HepG2 (cell line): ENCODE measurements at regions of chr19 and their contacts with region 1.

Region 1: GRCh38 chr19:10332955-10333757 is at the start of gene RAVER1:
- DNase-seq: peak; percentile 91
- ATAC-seq: peak; percentile 70
- H3K4me3 ChIP-seq: peak within 1 kb of the TSS; percentile 77 to 89 (median 86)
- H3K27ac ChIP-seq: peak within 1 kb of the TSS; percentile 95
- H3K4me1 ChIP-seq: peaks cover 37% of the 10 kb centered on the region
- H3K27me3 ChIP-seq: no peaks in the 10 kb centered on the region; a peak in 1 of 5 replicates
- CTCF ChIP-seq: no peak
- EP300 ChIP-seq: no peak; a peak in 1 of 4 replicates
- POLR2A ChIP-seq: peak; percentile 75 to 92
- RAD21 ChIP-seq: peak; percentile 42
- total RNA-seq, gene RAVER1: 7.9 and 17.7 TPM in 2 replicates

Region 2: DNA sequence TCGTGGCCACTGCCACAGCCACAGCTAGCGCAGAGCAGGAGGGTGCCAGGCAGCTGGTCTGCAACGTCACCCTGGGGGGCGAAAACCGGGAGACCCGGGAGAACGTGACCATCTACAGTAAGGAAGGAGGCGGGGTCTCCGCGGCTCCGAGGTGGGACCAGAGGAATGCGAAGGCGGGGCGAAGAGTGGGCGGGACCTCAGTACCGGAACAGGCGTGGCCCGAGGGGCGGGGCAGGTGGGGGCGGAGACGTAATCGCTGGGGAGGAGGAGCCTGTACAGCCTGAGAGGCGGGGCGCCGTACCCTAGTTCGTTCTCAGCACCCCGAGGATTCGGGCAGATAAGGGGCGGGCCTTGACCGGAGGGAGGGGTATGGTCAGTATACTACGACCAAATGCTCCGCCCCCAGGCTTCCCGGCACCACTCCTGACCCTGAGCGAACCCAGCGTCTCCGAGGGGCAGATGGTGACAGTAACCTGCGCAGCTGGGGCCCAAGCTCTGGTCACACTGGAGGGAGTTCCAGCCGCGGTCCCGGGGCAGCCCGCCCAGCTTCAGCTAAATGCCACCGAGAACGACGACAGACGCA is 40.9 kb before region 1 on chr19:
- CTCF ChIA-PET with region 1: no interaction called
- POLR2A ChIA-PET with region 1: interaction called, 55 read pairs
- in situ Hi-C with region 1: no loop called
- intact Hi-C with region 1: loop called (anchors 2 kb)
- DNase-seq: peak; percentile 27
- ATAC-seq: peak; percentile 8
- H3K4me3 ChIP-seq: peak overlapping the region; percentile 52 to 79 (median 62)
- H3K27ac ChIP-seq: no peak overlapping the region
- H3K4me1 ChIP-seq: peaks cover 64% of the 10 kb centered on the region
- H3K27me3 ChIP-seq: peaks cover 0 to 20% of the 10 kb centered on the region in 2 experiments; a peak in 3 of 5 replicates
- CTCF ChIP-seq: no peak
- EP300 ChIP-seq: no peak
- POLR2A ChIP-seq: no peak
- RAD21 ChIP-seq: no peak

Region 3: GRCh38 chr19:10321412-10321786 is 11.8 kb before region 1 on chr19:
- CTCF ChIA-PET with region 1: no interaction called
- POLR2A ChIA-PET with region 1: interaction called, 24 read pairs
- in situ Hi-C with region 1: no loop called
- intact Hi-C with region 1: no loop called
- DNase-seq: no peak
- ATAC-seq: no peak; the same call in 2 of the 3 replicates
- H3K4me3 ChIP-seq: no peak overlapping the region
- H3K27ac ChIP-seq: no peak overlapping the region
- H3K4me1 ChIP-seq: no peaks in the 10 kb centered on the region
- H3K27me3 ChIP-seq: no peaks in the 10 kb centered on the region
- CTCF ChIP-seq: no peak
- EP300 ChIP-seq: no peak
- POLR2A ChIP-seq: no peak
- RAD21 ChIP-seq: no peak

Region 4: DNA sequence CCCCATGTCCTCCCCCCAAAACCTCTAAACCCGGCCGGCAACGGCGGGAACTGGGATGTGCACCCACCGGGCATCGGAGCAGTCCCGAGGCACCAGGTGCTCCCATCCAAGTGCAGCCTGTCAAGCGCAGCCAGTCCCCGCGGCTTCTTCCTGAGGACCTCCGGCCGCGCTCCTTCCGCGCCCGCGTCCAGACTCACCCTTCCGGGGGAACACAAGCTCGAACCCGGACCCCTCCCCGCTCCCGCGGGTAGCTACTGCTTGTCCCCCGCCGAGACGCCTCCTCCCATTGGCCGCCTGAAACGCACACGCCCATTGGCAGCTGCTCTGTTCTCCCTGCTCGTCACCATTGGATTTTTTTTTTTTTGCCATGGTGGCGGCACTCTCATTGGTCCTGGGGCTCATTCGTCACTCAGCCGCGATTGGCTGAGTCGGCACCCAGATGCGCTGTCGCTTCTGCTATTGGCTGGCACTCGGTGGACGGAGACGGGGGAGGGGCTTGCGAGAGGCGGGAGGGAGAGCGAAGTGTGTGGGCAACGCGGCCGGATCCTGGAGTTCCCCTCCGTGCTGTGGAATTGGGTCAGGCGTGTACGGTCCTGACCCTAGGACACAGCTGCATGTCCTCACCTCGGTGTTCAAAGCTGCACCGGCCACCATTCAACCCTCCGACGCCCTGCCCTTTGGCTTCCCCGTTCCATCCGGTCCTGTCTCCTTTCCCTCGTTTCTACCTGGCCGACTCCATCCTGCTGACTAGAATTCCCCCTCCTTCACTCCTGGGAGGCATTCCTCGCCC is 47.4 kb after region 1 on chr19 and contains the start of gene TYK2:
- CTCF ChIA-PET with region 1: no interaction called
- POLR2A ChIA-PET with region 1: interaction called, 46 read pairs
- in situ Hi-C with region 1: loop called (anchors 5 kb)
- intact Hi-C with region 1: loop called (anchors 5 kb)
- DNase-seq: peak; percentile 97
- ATAC-seq: peak; percentile 93
- H3K4me3 ChIP-seq: peak within 1 kb of the TSS; percentile 90 to 98 (median 91)
- H3K27ac ChIP-seq: peak within 1 kb of the TSS; percentile 80
- H3K4me1 ChIP-seq: peaks cover 39% of the 10 kb centered on the region
- H3K27me3 ChIP-seq: no peaks in the 10 kb centered on the region; a peak in 1 of 5 replicates
- CTCF ChIP-seq: no peak
- EP300 ChIP-seq: peak in 1 of 2 experiments; percentile 6; a peak in 1 of 4 replicates
- POLR2A ChIP-seq: peak; percentile 79 to 91
- RAD21 ChIP-seq: 0 out of 2 replicates have a peak, but pooled peaks have one; percentile 16
- total RNA-seq, gene TYK2: 39.9 and 60.1 TPM in 2 replicates

Region 5: DNA sequence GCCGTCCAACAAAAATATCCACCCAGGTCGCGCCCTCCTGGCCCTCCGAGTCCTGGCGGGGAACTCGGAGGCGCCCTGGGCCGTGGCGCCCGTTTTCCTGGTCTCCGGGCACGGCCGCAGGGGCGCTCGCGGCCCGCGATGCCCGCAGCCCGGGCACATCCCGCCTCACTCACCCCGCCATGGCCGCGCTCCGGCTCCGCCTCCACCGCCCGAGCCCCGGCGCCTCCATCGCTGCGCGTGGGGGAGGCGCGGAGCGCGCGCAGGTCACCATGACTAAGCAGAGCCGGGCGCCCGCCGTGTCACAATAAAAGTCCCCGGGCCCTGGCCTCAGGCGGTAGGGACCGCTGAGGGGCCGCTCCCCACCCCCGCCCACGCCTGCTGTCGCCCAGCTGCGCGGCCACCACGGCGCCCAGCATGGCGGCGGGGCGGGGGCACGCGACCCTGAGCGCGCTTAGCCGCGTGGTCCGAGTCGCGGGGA is 169.4 kb after region 1 on chr19:
- CTCF ChIA-PET with region 1: no interaction called
- POLR2A ChIA-PET with region 1: no interaction called
- in situ Hi-C with region 1: no loop called
- intact Hi-C with region 1: no loop called
- DNase-seq: peak; percentile 83
- ATAC-seq: peak; percentile 91
- H3K4me3 ChIP-seq: peak overlapping the region; percentile 88 to 97 (median 94)
- H3K27ac ChIP-seq: peak overlapping the region; percentile 97
- H3K4me1 ChIP-seq: peaks cover 51% of the 10 kb centered on the region
- H3K27me3 ChIP-seq: no peaks in the 10 kb centered on the region
- CTCF ChIP-seq: peak; percentile 8; the same call in 1 of the 2 replicates
- EP300 ChIP-seq: peak; percentile 67 to 78
- POLR2A ChIP-seq: peak; percentile 64 to 79
- RAD21 ChIP-seq: peak; percentile 18; the same call in 1 of the 2 replicates